ENCODE measurements at regions of chrX and their contacts with region 1.

Region 1: DNA sequence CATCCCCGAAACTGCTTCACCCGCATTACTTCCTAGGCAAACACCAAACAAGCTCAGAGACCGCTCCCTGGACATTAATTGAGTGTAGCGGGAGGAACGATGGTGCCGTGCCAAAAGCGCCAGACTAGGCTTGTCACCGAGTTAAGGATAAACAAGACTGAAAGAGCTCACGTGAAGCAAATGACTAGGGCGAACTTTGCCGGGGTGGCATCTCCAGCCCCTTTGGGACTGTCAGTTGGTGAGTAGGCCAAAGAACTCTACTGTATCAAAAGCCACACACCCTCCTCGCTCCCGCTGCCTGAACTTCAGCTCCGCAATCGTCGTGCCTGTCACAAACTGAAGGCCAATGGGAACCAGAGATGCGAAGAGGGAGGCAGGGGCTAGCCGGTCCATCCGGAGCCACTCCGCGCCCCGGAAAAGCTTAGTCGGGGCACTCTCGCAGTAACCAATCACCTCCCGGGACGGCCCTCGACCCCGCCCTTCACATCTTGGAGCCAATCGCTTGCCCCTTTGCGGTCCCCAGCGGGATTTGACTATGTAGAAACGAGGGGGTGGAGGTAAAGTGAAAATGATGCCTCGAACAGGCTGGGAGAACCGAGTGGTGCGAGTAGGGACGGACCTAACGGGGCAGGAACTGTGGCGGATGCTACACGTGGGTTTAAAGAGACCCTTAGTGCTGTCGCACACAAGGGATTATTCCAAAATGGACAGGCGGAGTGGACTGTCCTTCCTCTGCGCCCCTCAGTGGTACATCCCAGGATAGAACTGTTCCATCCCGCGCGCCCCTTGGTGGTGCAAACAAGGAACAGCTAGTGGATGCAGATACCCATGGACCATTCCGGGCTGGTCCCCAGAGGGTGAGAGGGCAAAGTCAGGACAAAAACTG is 37.1 kb upstream of the FAM156A start:
- DNase-seq: peak; percentile 90 to 93
- ATAC-seq: peak; percentile 97 to 99
- H3K4me3 ChIP-seq: peak overlapping the region; percentile 59 to 68 (median 66)
- H3K27ac ChIP-seq: peak overlapping the region; percentile 78 to 94 (median 86)
- H3K4me1 ChIP-seq: peaks cover 10 to 14% of the 10 kb centered on the region in 2 donors
- H3K27me3 ChIP-seq: no peaks in the 10 kb centered on the region
- CTCF ChIP-seq: peak; percentile 69 to 80 (median 72)
- POLR2A ChIP-seq: peak in 1 of 2 donors; percentile 19

Region 2: DNA sequence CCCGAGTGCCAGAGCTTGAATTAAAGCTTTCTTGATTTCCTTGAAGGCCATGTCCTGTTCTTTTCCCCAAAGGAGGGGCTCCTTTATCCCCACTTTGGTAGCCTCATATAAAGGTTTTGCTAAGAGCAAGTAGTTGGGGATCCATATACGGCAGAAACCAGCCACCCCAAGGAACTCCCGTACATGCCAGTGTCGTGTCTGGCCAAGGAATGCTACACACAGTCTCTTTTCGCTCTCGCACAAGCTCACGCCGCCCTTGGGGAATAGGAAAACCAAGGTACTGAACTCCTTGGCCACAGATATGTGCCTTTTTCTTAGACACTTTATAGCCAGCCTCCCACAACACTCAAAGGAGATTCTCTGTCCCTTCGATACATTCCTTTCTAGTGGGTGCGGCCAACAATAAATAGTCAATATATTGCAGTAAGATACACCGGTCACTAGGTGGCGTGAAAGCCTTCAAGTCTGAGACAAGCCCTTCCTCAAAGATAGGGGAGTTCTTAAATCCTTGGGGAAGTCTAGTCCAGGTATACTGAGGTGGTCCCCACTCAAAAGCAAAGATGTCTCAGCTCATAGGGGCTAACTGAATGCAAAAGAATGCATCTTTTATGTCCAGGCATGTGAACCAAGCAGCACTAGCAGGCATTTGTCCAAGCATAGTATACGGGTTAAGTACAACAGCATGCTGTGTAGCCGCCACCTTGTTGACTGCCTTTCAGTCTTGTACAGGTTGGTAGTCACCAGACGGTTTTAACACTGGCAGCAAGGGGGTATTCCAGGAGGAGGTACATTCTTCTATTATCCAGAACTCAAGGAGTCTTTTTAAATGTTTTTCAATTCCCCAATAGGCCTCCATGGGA is 420.7 kb before region 1 on chrX:
- in situ Hi-C with region 1: loop called in 1 of 4 experiments (anchors 25 kb)
- intact Hi-C with region 1: loop called (anchors 2 kb)
- DNase-seq: no peak
- ATAC-seq: no peak
- H3K4me3 ChIP-seq: peak overlapping the region in 1 of 4 donors; percentile 29
- H3K27ac ChIP-seq: no peak overlapping the region
- H3K4me1 ChIP-seq: no peaks in the 10 kb centered on the region
- H3K27me3 ChIP-seq: peaks cover 0 to 2% (median 0%) of the 10 kb centered on the region in 3 donors
- CTCF ChIP-seq: peak in 4 of 5 experiments; percentile 14 to 54 (median 36)
- POLR2A ChIP-seq: no peak